ENCODE measurements at regions of chr5 and their contacts with region 1.

Region 1: DNA sequence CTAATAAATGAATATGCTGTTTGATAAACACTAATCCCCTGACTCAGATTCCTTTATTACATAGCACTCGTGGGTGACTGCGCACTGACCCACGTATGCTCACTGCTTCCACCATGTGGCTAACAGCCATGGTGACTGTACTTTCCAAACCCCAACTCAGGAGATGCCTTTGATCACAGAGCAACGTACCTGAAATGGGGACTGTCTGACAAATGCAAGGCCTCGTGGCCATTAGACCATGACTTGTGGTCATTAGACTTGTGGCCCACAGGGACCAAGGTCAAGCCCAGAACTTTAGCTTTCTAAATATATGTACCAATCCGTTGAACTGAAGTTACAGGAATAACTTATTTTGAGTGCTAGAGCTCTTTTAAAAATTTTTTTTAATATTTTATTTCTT is 46.6 kb downstream of the CYFIP2 start:
- DNase-seq: peak in 7 of 10 donors; percentile 28 to 59 (median 50)
- H3K4me3 ChIP-seq: no peak overlapping the region
- H3K27ac ChIP-seq: no peak overlapping the region
- H3K27me3 ChIP-seq: no peaks in the 10 kb centered on the region
- CTCF ChIP-seq: peak in 55 of 56 donors; percentile 22 to 82 (median 69)

Region 2: GRCh38 chr5:157148734-157149615 is 163.5 kb before region 1 on chr5:
- intact Hi-C with region 1: loop called (anchors 5 kb)
- DNase-seq: peak in 8 of 10 donors; percentile 40 to 81 (median 58)
- H3K4me3 ChIP-seq: no peak overlapping the region
- H3K27ac ChIP-seq: no peak overlapping the region
- H3K27me3 ChIP-seq: no peaks in the 10 kb centered on the region
- CTCF ChIP-seq: peak; percentile 71 to 93 (median 86)

Region 3: DNA sequence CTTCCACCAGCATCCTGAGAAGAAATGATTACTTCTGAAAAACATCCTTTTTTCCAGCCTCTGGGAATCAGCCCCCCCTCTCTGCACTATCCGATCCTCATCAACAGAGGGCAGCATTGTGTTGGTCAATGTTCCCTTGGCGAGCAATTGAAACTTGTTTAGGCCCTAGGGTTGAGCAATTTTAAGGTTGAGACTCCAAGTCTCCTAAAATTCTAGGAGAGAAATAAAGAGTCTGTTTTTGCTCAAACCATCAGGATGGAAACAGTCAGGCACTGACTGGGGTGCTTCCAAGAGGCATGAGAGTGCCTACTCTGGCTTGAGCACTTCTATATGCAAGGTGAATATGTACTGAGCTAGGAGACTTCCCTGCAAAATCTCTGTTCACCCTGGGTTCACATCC is 58.9 kb before region 1 on chr5:
- intact Hi-C with region 1: loop called (anchors 2 to 5 kb)
- DNase-seq: peak in 6 of 10 donors; percentile 39 to 69 (median 52)
- H3K4me3 ChIP-seq: peak overlapping the region in 1 of 59 donors; percentile 3
- H3K27ac ChIP-seq: peak overlapping the region in 2 of 59 donors; percentile 24 to 35
- H3K27me3 ChIP-seq: no peaks in the 10 kb centered on the region
- CTCF ChIP-seq: peak; percentile 57 to 93 (median 86)

Region 4: DNA sequence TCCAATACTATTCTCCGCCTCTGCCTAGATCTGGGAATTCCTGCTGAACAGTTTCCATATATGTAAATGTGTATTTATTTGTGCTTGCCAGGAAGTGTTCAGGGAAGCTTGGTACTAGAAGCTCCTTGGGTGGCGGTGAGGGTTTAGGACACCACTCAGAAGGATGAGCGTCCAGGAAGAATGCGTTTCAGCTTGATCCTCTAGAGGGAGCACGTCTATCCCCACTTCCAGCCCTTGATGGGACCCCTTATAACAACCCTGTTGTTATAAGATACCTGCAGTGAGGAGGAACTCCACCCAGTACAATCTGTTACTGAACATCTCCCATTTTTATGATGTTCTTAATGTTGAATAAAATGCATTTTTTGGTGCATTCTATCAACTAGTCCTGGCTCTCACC is 42.3 kb after region 1 on chr5:
- intact Hi-C with region 1: no loop called
- DNase-seq: no peak
- H3K4me3 ChIP-seq: no peak overlapping the region
- H3K27ac ChIP-seq: no peak overlapping the region
- H3K27me3 ChIP-seq: no peaks in the 10 kb centered on the region
- CTCF ChIP-seq: peak in 6 of 56 donors; percentile 5 to 38 (median 16)

Region 5: DNA sequence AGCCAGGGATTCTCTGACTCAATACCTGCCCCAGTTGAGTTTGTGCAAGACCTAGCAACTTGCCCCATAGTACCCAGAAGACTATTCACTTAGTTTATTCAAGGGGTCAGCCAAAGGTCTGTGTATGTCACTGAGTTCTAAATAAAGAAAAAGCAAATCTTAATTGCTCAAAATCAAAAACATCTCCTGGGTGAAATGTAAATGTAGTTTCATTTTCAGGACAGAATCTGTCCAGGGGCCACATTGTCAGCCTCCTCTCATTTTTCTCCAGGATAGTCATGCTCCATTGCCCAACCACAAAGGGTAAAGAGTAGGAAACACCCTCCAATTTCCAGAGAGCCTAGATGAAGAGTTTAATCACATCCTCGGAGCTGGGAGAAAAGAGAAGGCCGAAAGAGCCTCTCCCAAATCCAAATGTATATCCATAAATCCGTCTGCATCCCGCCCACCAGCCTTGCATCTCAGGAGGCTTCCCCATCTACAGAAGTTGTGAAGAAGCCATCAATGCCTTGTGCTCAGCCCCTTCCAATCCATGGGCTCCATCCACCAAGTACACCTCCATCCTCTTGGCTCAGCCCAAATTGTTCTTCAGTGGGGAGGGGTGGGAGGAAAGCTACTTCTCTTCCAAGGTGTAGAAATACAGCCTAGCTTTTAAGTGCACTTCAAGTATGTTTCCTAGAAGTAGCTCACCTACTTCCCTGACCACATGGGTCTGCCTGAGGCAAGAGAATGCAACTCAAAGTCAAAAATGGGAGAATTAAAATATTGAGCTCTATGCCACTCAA is 236.2 kb after region 1 on chr5:
- intact Hi-C with region 1: no loop called
- DNase-seq: no peak
- H3K4me3 ChIP-seq: no peak overlapping the region
- H3K27ac ChIP-seq: no peak overlapping the region
- H3K27me3 ChIP-seq: no peaks in the 10 kb centered on the region
- CTCF ChIP-seq: no peak

Measured in dorsolateral prefrontal cortex (tissue), 120 donors.